Prostate gland (tissue), 2 donors: ENCODE measurements at regions of chr20 and their contacts with region 1.

Region 1: DNA sequence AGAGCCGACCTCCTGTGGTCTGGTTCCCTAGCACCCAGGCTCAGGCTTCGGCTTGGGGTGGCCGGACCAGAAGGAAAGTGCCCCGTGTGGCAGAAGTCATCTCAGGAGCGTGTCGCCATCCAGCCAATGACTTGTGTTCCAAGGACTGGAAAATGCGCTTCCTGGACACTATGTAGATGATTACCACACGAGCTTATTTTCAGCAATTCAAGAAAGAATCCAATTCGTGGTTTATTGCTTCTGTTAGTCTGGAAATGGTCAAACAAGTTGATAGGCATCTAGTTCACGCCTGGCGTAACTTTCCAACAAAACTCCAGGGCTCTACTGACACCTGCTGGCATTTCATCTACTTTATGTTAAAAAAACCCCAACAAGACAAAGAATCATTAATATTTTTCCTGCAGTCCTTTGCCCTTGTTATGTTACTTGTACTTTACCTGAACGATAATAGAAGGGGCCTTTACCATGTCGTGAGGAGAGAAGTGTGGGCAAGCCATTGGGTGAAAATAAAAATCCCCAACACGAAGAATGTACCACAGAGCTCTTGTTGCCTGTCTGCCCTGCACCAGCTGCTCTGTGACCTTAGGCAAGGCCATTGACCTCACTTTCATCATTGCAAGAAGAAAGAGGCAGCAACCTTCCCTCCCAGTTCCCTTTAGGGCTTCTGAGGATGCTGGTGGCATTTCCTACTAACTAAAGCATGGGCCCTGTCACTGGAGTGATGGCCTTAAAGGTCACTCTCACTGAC is 154.7 kb upstream of the LAMP5 start:
- DNase-seq: peak; percentile 47
- H3K4me3 ChIP-seq: no peak overlapping the region
- H3K27ac ChIP-seq: no peak overlapping the region
- H3K4me1 ChIP-seq: no peaks in the 10 kb centered on the region
- H3K27me3 ChIP-seq: no peaks in the 10 kb centered on the region
- CTCF ChIP-seq: peak; percentile 30 to 62 (median 56)
- POLR2A ChIP-seq: no peak

Region 2: DNA sequence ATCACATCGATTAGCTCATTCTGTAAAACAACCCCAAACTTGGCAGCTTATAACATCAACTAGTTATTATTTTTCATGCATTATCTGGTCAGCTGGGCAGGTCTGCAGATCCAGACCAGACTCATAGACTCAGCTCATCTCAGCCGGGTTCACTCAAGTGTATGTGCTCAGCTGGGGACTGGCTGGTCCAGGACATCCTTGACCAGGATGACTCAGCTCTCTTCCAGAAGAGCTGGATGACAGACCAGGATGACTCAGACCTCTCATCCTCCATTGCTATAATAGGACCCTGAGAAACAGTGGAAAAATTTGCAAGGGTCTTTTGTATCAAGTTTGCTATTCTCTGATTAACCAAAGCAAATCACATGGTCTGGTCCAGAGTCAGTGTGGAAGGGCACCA is 603.3 kb before region 1 on chr20:
- intact Hi-C with region 1: loop called (anchors 10 kb)
- DNase-seq: no peak
- H3K4me3 ChIP-seq: no peak overlapping the region
- H3K27ac ChIP-seq: no peak overlapping the region
- H3K4me1 ChIP-seq: no peaks in the 10 kb centered on the region
- H3K27me3 ChIP-seq: no peaks in the 10 kb centered on the region
- CTCF ChIP-seq: no peak
- POLR2A ChIP-seq: no peak

Region 3: DNA sequence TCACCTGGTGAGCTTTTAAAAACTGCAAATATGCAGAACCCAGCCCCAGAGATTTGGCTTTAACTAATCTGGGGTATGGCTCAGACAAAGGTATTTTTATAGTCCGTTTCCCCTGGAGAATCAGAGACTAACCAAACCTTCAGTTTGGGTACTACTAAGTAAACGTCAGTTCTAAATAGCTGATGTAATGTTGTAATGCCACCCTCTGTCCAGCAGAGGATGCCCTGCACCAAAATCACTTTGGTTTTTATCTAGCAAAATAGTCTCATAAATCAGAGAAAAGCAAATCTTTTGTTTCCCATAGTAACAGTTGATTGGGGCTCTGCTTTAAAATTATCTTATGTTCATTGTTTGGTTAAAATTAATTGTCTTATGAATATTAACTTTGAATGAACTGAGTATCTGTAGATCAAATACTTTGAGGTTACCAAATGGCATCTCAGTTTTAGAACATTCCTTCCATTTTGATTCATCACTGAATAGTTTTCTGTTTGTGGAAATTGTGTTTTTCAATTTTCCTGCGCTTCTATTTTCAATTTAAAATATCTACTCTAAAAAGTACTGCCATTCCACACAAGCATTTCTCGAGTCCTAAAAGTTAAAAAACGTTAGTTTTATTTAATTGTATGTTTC is 569.2 kb before region 1 on chr20:
- intact Hi-C with region 1: loop called (anchors 2 kb)
- DNase-seq: no peak
- H3K4me3 ChIP-seq: no peak overlapping the region
- H3K27ac ChIP-seq: no peak overlapping the region
- H3K4me1 ChIP-seq: no peaks in the 10 kb centered on the region
- H3K27me3 ChIP-seq: no peaks in the 10 kb centered on the region
- CTCF ChIP-seq: peak; percentile 52 to 93 (median 81)
- POLR2A ChIP-seq: no peak

Region 4: DNA sequence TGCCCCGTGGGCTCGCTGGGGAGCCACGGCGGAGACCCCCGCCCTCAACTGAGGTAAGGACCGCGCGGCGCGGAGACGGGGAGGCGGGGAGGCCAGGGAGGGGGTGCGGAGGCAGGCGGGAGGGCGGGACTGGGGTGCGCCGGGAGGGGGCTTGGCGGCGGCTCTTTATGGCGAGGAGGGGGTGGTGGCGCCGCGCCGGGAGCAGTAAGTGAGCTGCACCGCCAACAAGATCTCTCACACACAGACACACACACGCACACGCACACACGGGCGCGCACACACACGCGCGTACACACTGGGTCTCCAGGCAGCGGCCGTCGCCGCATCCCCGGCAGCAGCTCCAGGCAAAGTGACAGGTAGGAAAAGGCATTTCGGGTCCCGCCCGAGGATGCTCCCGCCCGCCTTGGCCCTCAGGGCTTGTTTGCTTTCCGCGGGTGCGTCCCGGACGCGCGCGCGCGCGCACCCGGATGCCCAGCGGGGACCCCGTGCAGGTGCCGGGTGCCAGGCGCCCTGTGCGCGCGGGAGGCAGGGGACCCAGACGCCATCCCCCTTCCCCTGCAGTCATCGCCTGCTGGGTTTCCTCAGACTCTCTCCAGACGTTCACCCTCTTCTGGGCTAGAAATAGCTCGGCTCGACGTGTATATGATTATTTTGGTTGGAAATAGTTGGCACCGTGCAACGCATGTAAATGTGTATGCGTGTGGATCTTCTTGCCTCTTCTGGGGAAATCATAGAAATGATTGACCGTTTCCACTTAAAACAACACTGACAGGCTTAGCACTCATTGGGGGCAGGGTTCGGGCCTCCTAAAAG is 290.7 kb before region 1 on chr20 and contains the start of gene PLCB4:
- intact Hi-C with region 1: loop called (anchors 5 kb)
- DNase-seq: peak; percentile 45
- H3K4me3 ChIP-seq: peak within 1 kb of the TSS; percentile 80 to 88
- H3K27ac ChIP-seq: peak within 1 kb of the TSS; percentile 78 to 81
- H3K4me1 ChIP-seq: no peaks in the 10 kb centered on the region
- H3K27me3 ChIP-seq: no peaks in the 10 kb centered on the region
- CTCF ChIP-seq: no peak
- POLR2A ChIP-seq: no peak
- total RNA-seq, gene PLCB4: 9.1 to 11.6 TPM

Region 5: GRCh38 chr20:9093218-9093957 is 266.3 kb before region 1 on chr20:
- intact Hi-C with region 1: no loop called
- DNase-seq: no peak
- H3K4me3 ChIP-seq: no peak overlapping the region
- H3K27ac ChIP-seq: no peak overlapping the region
- H3K4me1 ChIP-seq: peaks cover 5% of the 10 kb centered on the region
- H3K27me3 ChIP-seq: no peaks in the 10 kb centered on the region
- CTCF ChIP-seq: no peak
- POLR2A ChIP-seq: no peak